ENCODE measurements at regions of chr12 and their contacts with region 1.

Region 1: GRCh38 chr12:1787714-1788113 is 32.7 kb upstream of the LRTM2 start:
- DNase-seq: no peak
- H3K4me3 ChIP-seq: no peak overlapping the region
- H3K27ac ChIP-seq: no peak overlapping the region
- H3K4me1 ChIP-seq: no peaks in the 10 kb centered on the region
- H3K27me3 ChIP-seq: no peaks in the 10 kb centered on the region

Region 2: DNA sequence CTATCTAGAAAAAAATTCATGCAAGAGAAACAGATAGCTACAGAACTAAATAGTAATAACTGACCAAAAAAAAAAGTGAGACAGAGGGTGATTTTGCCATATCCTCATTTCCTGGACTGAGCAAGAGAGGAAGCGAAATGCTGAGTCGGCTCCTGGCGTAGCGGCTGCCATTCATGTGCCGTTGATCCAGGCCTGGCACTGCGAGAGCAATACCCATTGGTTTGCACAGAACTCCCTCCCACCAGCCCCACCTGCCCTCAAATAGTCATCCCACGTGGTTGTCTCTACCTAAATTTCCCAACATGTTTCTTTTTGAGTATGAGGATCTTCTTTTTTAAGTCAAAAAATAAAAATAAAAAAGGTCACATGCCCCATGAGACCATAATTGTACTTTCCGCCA is 168.1 kb before region 1 on chr12:
- in situ Hi-C with region 1: no loop called
- DNase-seq: no peak
- H3K4me3 ChIP-seq: no peak overlapping the region
- H3K27ac ChIP-seq: no peak overlapping the region
- H3K4me1 ChIP-seq: peaks cover 24% of the 10 kb centered on the region
- H3K27me3 ChIP-seq: no peaks in the 10 kb centered on the region

Region 3: GRCh38 chr12:1644534-1645438 is 142.9 kb before region 1 on chr12:
- in situ Hi-C with region 1: loop called (anchors 5 kb)
- DNase-seq: peak; percentile 90
- H3K4me3 ChIP-seq: no peak overlapping the region
- H3K27ac ChIP-seq: peak overlapping the region; percentile 73
- H3K4me1 ChIP-seq: peaks cover 29% of the 10 kb centered on the region
- H3K27me3 ChIP-seq: no peaks in the 10 kb centered on the region

Region 4: DNA sequence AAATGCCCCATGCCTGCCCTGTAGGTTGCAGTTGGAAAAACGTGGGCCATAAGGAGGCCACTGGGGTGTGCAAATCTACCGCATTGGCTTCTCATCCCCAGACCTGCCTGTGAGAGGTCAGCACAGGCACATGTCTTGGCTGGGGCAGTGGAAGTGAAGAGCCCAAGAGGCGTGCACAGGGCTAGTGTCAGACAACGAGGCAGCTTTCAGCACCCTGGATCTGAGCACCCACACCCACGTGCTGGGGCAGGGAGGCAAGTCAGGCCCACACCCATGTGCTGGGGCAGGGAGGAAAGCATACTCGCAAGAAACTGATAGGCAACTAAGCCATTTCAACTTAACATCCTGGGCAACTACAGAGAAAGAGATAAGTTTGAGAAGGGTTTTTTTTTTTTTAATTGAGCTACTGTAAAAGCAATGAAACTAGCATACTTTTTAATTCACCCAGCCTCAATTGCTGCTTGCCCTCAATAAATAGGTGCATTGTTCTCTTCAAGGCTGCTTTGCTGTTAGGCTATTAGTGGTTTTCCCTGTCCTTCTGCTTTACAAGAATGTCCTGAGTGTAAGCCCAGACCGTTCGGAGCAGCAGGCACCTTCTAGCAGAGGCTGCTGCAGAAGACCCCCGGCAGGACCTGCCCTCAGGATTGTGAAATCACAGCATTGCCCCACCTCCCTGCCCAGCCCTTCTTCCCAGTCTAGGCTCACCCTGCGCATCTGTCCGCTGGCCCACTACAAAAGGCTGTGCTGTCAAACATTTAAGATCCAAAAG is 651.8 kb after region 1 on chr12:
- in situ Hi-C with region 1: no loop called
- DNase-seq: no peak
- H3K4me3 ChIP-seq: no peak overlapping the region
- H3K27ac ChIP-seq: no peak overlapping the region
- H3K4me1 ChIP-seq: no peaks in the 10 kb centered on the region
- H3K27me3 ChIP-seq: no peaks in the 10 kb centered on the region